AG04449 (cell line): ENCODE measurements at regions of chr17 and their contacts with region 1.

Region 1: DNA sequence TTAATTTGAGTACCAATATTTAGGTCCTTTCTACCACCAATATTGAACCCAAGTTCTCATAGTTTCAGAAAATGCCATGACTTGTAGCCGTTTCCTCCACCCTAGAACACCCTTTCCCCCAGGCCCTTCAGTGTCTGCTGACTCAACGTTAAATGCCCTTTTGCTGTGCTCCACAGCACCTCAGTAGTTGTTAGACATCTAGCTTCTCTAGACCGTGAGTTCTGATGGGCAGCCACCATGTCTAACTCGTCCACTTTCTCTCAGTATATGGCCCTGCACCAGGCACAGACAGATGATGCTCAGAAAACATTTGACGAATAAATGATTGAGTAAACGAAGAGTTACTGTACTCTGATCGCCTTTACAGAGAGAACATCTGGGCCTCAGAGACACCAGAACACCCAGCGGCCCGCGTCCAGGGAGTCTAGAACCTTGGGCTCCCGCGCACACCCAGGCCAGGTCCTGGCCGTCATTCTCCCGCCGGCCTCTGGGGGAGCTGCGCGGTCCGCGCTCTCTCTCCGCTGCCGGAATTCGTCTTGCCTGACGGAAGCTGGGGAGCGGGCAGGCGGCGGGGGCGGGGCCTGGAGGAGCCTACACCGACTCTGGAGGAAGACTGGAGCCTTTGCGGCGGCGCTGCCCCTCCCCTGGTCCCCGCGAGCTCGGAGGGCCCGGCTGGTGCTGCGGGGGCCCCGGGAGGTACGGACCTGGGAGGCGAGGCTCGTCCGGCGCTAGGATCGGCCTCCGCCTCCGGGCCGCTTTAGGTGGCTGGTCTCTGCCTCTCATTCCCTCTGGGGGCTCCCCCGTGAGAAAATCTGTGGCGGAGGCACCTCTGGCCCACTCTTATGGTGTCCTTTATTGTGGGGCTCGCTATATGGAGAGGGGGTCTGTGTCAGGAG is at the start of gene NKIRAS2:
- DNase-seq: no peak
- H3K4me3 ChIP-seq: peak within 1 kb of the TSS; percentile 79
- CTCF ChIP-seq: peak; percentile 97

Region 2: DNA sequence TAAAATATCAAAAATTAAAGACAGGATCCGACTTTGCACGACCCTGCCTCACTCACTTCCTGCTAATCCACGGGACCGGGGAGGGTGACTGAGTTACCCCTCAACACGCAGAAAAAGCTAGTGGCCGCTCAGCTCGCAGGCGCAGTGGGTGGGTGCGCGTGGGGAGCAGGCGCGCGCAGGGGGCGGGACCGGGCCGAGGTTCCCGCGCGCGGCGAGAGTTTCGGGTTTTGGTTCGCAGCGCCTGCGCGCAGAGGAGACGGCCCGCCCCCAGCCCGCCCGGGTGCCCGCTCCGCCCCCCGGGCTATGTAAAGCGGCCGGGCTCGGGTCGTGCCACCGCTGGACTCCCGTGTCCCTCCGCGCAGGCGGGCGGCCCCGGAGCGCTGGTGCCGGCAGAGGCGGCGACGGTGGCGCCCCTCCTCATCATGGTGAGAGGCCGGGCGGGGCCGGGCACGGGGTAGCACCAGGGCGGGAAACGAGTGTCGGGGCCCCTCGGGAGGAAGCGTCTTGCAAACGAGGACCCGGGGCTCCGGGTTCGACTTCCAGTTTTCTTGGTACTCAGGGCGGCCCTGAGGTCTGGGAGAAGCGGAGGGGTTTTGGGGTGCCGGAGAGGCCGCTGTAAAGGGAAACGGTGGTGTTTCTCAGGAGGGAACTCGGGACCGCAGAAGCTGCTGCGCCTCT is 53.2 kb before region 1 on chr17 and contains the start of gene CNP:
- CTCF ChIA-PET with region 1: interaction called, 46 read pairs
- POLR2A ChIA-PET with region 1: interaction called, 15 read pairs
- DNase-seq: no peak
- H3K4me3 ChIP-seq: peak within 1 kb of the TSS; percentile 81
- CTCF ChIP-seq: no peak

Region 3: GRCh38 chr17:41982026-41982760 is 37.6 kb before region 1 on chr17:
- CTCF ChIA-PET with region 1: interaction called, 10 read pairs
- POLR2A ChIA-PET with region 1: no interaction called
- DNase-seq: no peak
- H3K4me3 ChIP-seq: no peak overlapping the region
- CTCF ChIP-seq: no peak

Region 4: DNA sequence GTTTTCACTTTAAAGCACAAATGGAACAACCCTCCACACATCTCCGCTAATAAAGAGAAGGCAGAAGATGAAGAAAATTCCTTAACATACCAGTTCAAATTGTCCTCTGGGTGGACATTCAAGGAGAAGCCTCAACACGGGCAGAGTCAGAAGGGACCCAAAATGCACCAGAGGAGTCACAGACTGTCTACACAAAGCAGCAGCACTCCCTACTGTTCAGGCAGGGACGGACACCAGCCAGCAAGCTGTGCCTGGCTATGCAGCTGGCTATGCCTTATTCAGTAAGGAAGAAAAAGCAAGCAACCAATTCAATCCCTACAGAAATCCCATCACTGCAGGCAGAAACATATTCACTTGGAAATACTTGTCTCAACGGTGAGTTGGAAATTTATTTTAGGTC is 10.6 kb before region 1 on chr17:
- CTCF ChIA-PET with region 1: interaction called, 83 read pairs
- POLR2A ChIA-PET with region 1: no interaction called
- DNase-seq: no peak
- H3K4me3 ChIP-seq: no peak overlapping the region
- CTCF ChIP-seq: no peak

Region 5: GRCh38 chr17:42039794-42040763 is 20.3 kb after region 1 on chr17:
- CTCF ChIA-PET with region 1: interaction called, 23 read pairs
- POLR2A ChIA-PET with region 1: interaction called, 3 read pairs
- DNase-seq: no peak
- H3K4me3 ChIP-seq: no peak overlapping the region
- CTCF ChIP-seq: no peak

Region 6: GRCh38 chr17:42212382-42212781 is 192.6 kb after region 1 on chr17:
- CTCF ChIA-PET with region 1: no interaction called
- POLR2A ChIA-PET with region 1: no interaction called
- DNase-seq: no peak
- H3K4me3 ChIP-seq: no peak overlapping the region
- CTCF ChIP-seq: no peak